Left lung (tissue), 14 donors: ENCODE measurements at regions of chr14 and their contacts with region 1.

Region 1: DNA sequence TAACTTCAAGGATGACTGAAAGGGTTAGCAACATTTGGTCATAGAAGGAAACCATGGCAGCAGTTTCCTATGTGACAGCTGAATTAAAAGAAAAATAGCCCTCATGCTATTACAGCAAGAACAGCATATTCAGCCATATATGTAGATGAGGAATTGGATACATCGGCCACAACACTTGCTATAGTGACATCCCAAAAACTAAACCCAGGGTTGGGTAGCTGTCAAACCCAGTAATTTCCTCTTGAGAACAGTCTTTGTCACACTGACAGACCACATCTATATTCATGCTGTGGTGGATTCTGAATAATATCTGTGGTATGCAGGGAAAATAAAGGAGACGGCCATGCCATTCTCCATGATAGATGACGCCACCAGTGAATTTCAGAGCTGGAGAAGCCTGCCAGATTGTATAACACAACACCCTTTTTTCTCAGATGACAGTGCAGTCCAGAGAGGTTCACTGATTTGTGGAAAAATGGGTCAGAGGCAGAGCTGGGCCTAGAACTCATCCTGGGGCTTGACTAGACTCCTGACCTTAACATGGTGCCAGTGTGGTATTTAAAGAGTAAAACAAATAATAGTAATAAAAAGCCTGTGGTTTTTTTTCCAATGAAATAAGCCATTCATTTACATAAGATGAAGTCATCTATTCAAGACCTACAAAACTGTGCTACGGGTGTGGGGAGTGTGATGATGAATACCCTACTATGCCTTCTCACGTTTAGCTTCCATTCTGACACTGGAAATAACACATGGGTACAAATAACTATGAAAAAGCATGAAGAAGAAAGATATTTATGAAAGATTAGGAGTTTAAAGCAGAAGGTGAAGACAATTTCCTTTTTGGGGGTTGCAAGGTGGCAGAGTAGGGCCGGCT is 32.3 kb downstream of the EFCAB11 start:
- DNase-seq: no peak
- ATAC-seq: no peak
- H3K4me3 ChIP-seq: no peak overlapping the region
- H3K27ac ChIP-seq: no peak overlapping the region
- H3K4me1 ChIP-seq: no peaks in the 10 kb centered on the region
- H3K27me3 ChIP-seq: no peaks in the 10 kb centered on the region
- CTCF ChIP-seq: no peak

Region 2: DNA sequence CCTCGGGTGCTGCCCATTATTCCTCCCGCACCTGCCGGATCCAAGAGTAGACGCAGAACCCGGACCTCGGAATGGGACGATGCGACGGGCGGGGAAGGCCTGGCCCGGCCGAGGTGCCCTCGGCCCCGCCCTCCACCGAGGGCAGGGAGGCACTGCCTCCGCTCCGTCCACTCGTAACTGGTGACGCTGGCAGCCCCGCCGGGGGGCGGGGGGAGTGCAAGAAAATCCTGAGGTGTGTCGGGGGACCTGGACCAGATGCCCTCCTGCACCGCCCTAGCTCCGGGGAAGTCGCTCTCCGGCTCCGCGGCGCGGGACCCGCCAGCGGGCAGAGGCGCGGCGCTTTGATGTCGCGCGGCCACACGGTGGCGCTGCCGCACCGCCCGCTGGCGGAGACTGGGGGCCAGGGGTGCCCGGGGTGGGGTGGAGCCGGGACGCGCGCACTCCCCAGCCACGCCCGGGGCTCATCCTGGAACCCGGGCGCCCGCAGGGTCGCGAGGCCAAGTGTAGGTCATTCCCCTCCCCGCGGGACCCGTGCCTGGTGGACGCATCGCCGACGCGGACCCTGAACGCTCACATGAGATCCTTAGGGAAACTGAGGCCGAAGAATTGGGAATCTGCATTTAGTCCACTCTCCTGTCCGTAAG is 895.0 kb before region 1 on chr14:
- intact Hi-C with region 1: loop called in 1 of 2 experiments (anchors 10 kb)
- DNase-seq: peak; percentile 52 to 92 (median 62)
- ATAC-seq: peak; percentile 94
- H3K4me3 ChIP-seq: peak overlapping the region; percentile 41 to 50
- H3K27ac ChIP-seq: no peak overlapping the region
- H3K4me1 ChIP-seq: peaks cover 3 to 29% of the 10 kb centered on the region in 2 donors
- H3K27me3 ChIP-seq: peaks cover 8 to 69% of the 10 kb centered on the region in 2 donors
- CTCF ChIP-seq: peak; percentile 80 to 86

Region 3: DNA sequence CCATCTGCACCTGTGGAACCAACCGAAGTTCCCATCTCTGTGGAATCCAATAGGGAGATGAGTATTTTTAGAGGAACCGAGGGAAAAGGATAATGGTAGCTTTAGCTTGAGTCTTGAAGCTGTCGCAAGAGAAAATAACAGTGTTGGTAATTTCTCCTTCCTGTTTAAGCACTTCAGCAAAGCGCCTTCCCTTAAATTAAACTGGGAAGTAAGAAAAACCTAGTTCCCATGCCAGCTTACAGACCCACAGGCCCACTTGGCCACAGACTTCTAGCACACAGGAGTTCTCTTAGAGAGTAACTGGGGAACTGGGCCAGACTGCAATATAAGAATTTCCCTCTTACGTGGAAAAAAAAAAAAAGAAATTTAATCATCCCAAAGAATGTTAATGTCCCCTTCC is 191.6 kb before region 1 on chr14:
- intact Hi-C with region 1: no loop called
- DNase-seq: no peak
- ATAC-seq: peak; percentile 48
- H3K4me3 ChIP-seq: no peak overlapping the region
- H3K27ac ChIP-seq: peak overlapping the region in 1 of 2 donors; percentile 74
- H3K4me1 ChIP-seq: peaks cover 0 to 12% of the 10 kb centered on the region in 2 donors
- H3K27me3 ChIP-seq: no peaks in the 10 kb centered on the region
- CTCF ChIP-seq: no peak